ENCODE measurements at regions of chr1 and their contacts with region 1.

Region 1: GRCh38 chr1:40691538-40692428 is at the start of gene NFYC:
- DNase-seq: peak; percentile 96
- H3K4me3 ChIP-seq: peak within 1 kb of the TSS; percentile 83
- H3K27ac ChIP-seq: peak within 1 kb of the TSS; percentile 97
- H3K27me3 ChIP-seq: no peaks in the 10 kb centered on the region
- CTCF ChIP-seq: no peak
- polyA plus RNA-seq, gene NFYC: 37.9 and 39.9 TPM in 2 replicates

Region 2: DNA sequence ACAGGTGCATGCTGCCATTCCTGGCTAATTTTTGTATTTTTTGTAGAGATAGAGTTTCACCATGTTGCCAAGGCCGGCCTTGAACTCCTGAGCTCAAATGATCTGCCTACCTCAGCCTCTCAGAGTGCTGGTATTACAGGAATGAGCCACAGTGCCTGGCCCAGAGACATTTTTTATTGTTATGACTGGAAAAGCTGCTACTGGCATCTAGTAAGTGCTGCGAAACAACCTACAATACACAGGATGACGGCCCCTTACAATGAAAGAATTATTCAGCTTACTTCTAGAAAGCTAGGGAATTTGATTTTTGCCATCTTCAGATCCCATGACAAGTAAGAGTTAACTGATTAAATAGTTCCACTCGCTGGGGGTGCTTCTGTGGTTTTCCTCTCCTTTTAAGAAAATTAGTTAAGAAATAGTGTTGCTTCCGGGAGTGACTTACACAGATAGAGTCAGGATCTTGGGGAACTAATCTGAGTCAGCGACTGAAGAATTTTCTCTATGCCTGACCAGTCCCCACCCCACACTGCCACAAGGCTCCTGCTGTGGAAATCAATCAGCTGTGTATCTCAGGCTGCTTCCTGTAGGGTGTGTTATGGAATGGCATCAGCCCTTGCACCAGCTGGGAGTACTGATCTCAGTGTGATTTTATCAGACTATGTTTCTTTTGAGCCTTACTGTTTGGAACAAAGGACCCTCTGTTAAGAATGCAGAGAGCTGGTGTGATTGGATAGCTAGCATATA is 1293.3 kb before region 1 on chr1:
- CTCF ChIA-PET with region 1: no interaction called
- POLR2A ChIA-PET with region 1: no interaction called
- DNase-seq: peak; percentile 91
- H3K4me3 ChIP-seq: no peak overlapping the region
- H3K27ac ChIP-seq: peak overlapping the region; percentile 88
- H3K27me3 ChIP-seq: no peaks in the 10 kb centered on the region
- CTCF ChIP-seq: 0 out of 2 replicates have a peak, but pooled peaks have one; percentile 5

Region 3: GRCh38 chr1:40625066-40625465 is 66.7 kb before region 1 on chr1:
- CTCF ChIA-PET with region 1: no interaction called
- POLR2A ChIA-PET with region 1: no interaction called
- DNase-seq: no peak
- H3K4me3 ChIP-seq: no peak overlapping the region
- H3K27ac ChIP-seq: no peak overlapping the region
- H3K27me3 ChIP-seq: peaks cover 13% of the 10 kb centered on the region
- CTCF ChIP-seq: peak; percentile 27; the same call in 1 of the 2 replicates

Region 4: DNA sequence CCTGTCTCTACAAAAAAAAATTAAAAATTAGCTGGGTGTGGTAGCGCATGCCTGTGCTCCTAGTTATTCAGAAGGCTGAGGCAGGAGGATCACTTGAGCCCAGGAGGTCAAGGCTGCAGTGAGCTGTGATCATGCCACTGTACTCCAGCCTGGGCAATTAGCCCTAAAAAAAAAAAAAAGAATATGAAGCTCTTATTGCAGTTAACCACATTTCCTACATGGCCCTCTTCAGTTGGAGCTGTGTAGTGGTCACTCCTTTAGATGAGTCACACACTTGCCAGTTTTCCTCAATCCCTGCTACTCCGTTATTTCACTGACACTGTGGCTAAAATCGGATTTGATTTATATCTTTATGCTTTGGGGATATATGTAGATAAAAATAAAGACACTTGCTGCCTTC is 11.5 kb after region 1 on chr1:
- CTCF ChIA-PET with region 1: interaction called, 3 read pairs
- POLR2A ChIA-PET with region 1: interaction called, 18 read pairs
- DNase-seq: no peak
- H3K4me3 ChIP-seq: no peak overlapping the region
- H3K27ac ChIP-seq: no peak overlapping the region
- H3K27me3 ChIP-seq: no peaks in the 10 kb centered on the region
- CTCF ChIP-seq: no peak

Region 5: GRCh38 chr1:40709100-40709801 is 17.5 kb after region 1 on chr1:
- CTCF ChIA-PET with region 1: interaction called, 3 read pairs
- POLR2A ChIA-PET with region 1: interaction called, 18 read pairs
- DNase-seq: peak; percentile 90
- H3K4me3 ChIP-seq: peak overlapping the region; percentile 69
- H3K27ac ChIP-seq: peak overlapping the region; percentile 81
- H3K27me3 ChIP-seq: no peaks in the 10 kb centered on the region
- CTCF ChIP-seq: no peak

Region 6: GRCh38 chr1:40717955-40718354 is 26.2 kb after region 1 on chr1:
- CTCF ChIA-PET with region 1: interaction called, 4 read pairs
- POLR2A ChIA-PET with region 1: interaction called, 16 read pairs
- DNase-seq: no peak
- H3K4me3 ChIP-seq: no peak overlapping the region
- H3K27ac ChIP-seq: no peak overlapping the region
- H3K27me3 ChIP-seq: no peaks in the 10 kb centered on the region
- CTCF ChIP-seq: no peak

Region 7: GRCh38 chr1:40736085-40736531 is 44.3 kb after region 1 on chr1:
- CTCF ChIA-PET with region 1: no interaction called
- POLR2A ChIA-PET with region 1: no interaction called
- DNase-seq: no peak
- H3K4me3 ChIP-seq: no peak overlapping the region
- H3K27ac ChIP-seq: no peak overlapping the region
- H3K27me3 ChIP-seq: no peaks in the 10 kb centered on the region
- CTCF ChIP-seq: no peak